ENCODE measurements at regions of chr6 and their contacts with region 1.

Region 1: DNA sequence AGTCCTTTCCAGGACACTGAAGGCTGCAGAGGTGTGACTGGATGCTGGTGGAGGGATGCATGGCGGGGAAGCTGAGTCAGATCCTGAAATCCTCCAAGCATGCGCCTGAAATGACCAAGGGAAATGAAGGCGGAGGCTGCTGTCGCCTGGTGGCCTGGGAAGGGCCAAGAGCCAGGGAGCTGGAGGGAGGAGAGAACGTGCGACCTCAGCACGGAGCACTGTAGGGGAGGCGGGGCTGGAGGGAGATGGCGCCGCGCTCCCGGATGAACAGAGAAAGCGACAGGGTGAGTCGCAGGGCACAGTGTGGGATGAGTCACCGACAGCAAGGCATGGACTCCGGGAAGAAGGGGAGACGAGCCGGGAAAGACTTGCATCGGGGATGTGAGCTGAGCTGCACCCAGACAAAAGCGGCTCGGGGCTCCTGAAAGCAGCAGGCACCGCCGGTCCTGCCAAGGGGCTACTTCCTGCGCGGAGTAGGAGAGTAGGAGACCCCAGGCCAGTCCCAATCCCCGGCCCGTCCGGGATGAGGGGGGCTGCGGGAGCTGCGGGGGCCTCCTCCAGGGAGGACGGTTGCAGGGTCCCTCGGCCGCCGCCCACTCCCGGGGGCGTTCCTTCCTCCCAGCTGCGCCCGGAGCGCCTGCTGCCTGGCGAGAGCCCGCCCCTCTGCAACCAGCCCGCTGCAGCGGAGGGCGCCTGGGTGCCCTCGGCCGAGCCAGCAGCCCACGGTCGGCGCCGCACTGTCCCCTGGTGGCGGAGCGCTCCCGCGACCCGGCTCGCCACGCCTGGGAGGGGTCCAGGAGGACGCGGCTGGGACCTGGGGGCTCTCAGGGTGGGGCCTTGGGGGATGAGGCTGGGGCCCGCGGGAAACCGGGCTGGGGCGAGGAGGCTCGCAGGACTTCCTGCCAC is 11.0 kb upstream of the NQO2 start:
- DNase-seq: peak; percentile 77 to 89
- ATAC-seq: peak; percentile 76 to 90 (median 82)
- H3K4me3 ChIP-seq: peak overlapping the region; percentile 79
- H3K4me3 Mint-ChIP-seq: peak overlapping the region; percentile 96
- H3K27ac ChIP-seq: peak overlapping the region; percentile 96
- H3K27ac Mint-ChIP-seq: peak overlapping the region; percentile 95 to 99
- H3K4me1 ChIP-seq: peaks cover 25% of the 10 kb centered on the region
- H3K4me1 Mint-ChIP-seq: peaks cover 26 to 34% of the 10 kb centered on the region in 2 donors
- H3K27me3 ChIP-seq: no peaks in the 10 kb centered on the region
- H3K27me3 Mint-ChIP-seq: no peaks in the 10 kb centered on the region
- CTCF ChIP-seq: peak; percentile 86

Region 2: GRCh38 chr6:2765166-2765895 is 223.3 kb before region 1 on chr6 and contains the start of gene WRNIP1:
- intact Hi-C with region 1: loop called (anchors 1 kb)
- DNase-seq: peak; percentile 94 to 98
- ATAC-seq: peak; percentile 85 to 96 (median 90)
- H3K4me3 ChIP-seq: peak within 1 kb of the TSS; percentile 85
- H3K4me3 Mint-ChIP-seq: peak within 1 kb of the TSS; percentile 94
- H3K27ac ChIP-seq: peak within 1 kb of the TSS; percentile 100
- H3K27ac Mint-ChIP-seq: peak within 1 kb of the TSS; percentile 96 to 98
- H3K4me1 ChIP-seq: peaks cover 25% of the 10 kb centered on the region
- H3K4me1 Mint-ChIP-seq: peaks cover 43 to 48% of the 10 kb centered on the region in 2 donors
- H3K27me3 ChIP-seq: no peaks in the 10 kb centered on the region
- H3K27me3 Mint-ChIP-seq: no peaks in the 10 kb centered on the region
- CTCF ChIP-seq: peak; percentile 50
- total RNA-seq, gene WRNIP1: 27.9 to 34.8 (median 30.5) TPM

Region 3: GRCh38 chr6:2848851-2849250 is 139.8 kb before region 1 on chr6:
- intact Hi-C with region 1: loop called (anchors 1 kb)
- DNase-seq: peak in 1 of 2 donors; percentile 86
- ATAC-seq: no peak
- H3K4me3 ChIP-seq: no peak overlapping the region
- H3K4me3 Mint-ChIP-seq: peak overlapping the region; percentile 9
- H3K27ac ChIP-seq: no peak overlapping the region
- H3K27ac Mint-ChIP-seq: peak overlapping the region in 1 of 2 donors; percentile 37
- H3K4me1 ChIP-seq: peaks cover 18% of the 10 kb centered on the region
- H3K4me1 Mint-ChIP-seq: peaks cover 21 to 31% of the 10 kb centered on the region in 2 donors
- H3K27me3 ChIP-seq: no peaks in the 10 kb centered on the region
- H3K27me3 Mint-ChIP-seq: no peaks in the 10 kb centered on the region
- CTCF ChIP-seq: no peak

Region 4: GRCh38 chr6:2952557-2953095 is 36.1 kb before region 1 on chr6:
- intact Hi-C with region 1: loop called (anchors 1 kb)
- DNase-seq: peak; percentile 39 to 77
- ATAC-seq: peak; percentile 85 to 91 (median 90)
- H3K4me3 ChIP-seq: no peak overlapping the region
- H3K4me3 Mint-ChIP-seq: peak overlapping the region; percentile 62
- H3K27ac ChIP-seq: no peak overlapping the region
- H3K27ac Mint-ChIP-seq: peak overlapping the region; percentile 67 to 75
- H3K4me1 ChIP-seq: peaks cover 8% of the 10 kb centered on the region
- H3K4me1 Mint-ChIP-seq: peaks cover 8 to 18% of the 10 kb centered on the region in 2 donors
- H3K27me3 ChIP-seq: no peaks in the 10 kb centered on the region
- H3K27me3 Mint-ChIP-seq: no peaks in the 10 kb centered on the region
- CTCF ChIP-seq: peak; percentile 76

Region 5: DNA sequence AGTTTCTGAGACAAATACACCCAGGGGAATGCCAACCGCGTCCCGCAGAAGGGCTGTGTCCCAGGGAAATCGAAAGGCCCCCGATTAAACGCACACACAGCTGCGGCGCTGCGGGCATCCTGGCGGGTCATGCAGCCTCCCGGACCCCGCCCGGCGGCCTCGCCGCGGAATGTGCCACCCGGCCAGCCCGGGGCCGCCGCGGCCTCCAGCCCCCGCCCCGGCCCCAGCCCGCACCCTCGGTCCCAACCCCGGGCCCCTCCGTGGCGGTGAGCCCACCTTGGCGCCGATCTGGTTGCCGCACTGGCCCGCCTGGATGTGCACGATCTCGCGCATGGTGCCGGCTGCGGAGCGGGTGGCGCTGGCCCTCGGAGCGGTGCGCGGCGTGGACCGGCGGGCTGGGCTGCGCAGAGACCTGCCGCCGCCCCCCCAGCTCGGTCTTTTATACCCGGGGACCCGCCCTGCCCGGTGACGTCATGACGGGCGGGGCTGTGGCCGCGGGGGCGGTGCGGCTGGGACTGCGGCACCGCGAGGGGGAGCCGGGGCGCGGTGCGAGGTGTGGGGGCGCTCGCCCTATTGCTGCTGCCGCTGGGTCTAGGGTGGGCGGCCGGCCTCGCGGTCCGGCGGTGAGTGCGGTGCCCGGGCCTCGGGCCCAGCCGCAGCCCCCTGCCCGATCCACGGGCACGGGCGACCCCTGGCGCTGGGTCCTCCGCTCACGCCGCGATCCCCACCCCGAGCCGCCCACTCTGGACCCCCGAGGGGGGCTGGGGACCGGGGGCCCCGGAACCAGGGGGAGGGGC is 168.7 kb after region 1 on chr6 and contains the start of gene TUBB2A:
- intact Hi-C with region 1: loop called (anchors 1 kb)
- DNase-seq: peak; percentile 86 to 93
- ATAC-seq: peak; percentile 83 to 88 (median 88)
- H3K4me3 ChIP-seq: peak within 1 kb of the TSS; percentile 53
- H3K4me3 Mint-ChIP-seq: peak within 1 kb of the TSS; percentile 90
- H3K27ac ChIP-seq: no peak within 1 kb of the TSS
- H3K27ac Mint-ChIP-seq: peak within 1 kb of the TSS; percentile 66 to 68
- H3K4me1 ChIP-seq: peaks cover 27% of the 10 kb centered on the region
- H3K4me1 Mint-ChIP-seq: peaks cover 9 to 19% of the 10 kb centered on the region in 2 donors
- H3K27me3 ChIP-seq: peaks cover 3% of the 10 kb centered on the region
- H3K27me3 Mint-ChIP-seq: peaks cover 8 to 12% of the 10 kb centered on the region in 2 donors
- CTCF ChIP-seq: peak; percentile 45
- total RNA-seq, gene TUBB2A: 9.2 to 13.2 (median 11.4) TPM

Measured in natural killer cell (primary cell).